Activated CD4-positive, alpha-beta memory T cell treated with anti-CD3 and anti-CD28 coated beads for 36 hours (primary cell): ENCODE measurements at regions of chr14 and their contacts with region 1.

Region 1: GRCh38 chr14:57268161-57269069 is at the starts of genes AP5M1 and EXOC5:
- DNase-seq: peak; percentile 96
- H3K4me3 Mint-ChIP-seq: peak within 1 kb of the TSS; percentile 99
- H3K27ac Mint-ChIP-seq: peak within 1 kb of the TSS; percentile 99
- H3K4me1 Mint-ChIP-seq: peaks cover 48% of the 10 kb centered on the region
- H3K27me3 Mint-ChIP-seq: no peaks in the 10 kb centered on the region
- total RNA-seq, gene AP5M1: 27.7 to 31.1 TPM
- total RNA-seq, gene EXOC5: 82.1 to 82.6 TPM

Region 2: DNA sequence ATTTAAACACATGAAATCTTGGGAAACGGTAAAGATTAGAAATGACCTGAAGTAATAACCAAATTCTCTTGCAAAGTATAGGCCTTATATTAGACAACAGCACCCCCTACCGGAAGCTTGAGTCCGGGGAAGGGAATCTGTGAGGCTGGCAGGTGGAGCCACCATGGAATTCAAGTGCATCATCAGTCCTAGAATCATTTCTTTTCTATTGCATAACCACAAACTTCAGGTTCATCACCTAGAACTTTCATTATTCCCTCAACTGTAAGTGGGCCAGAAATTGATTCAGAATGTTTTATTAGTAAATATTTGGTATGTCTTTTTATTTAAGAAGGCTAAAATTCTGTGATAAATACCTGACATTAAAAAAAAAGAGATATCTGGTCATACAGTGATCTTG is 48.9 kb after region 1 on chr14:
- CTCF ChIA-PET with region 1: interaction called, 12 read pairs
- POLR2A ChIA-PET with region 1: no interaction called
- intact Hi-C with region 1: no loop called
- DNase-seq: peak; percentile 73
- H3K4me3 Mint-ChIP-seq: no peak overlapping the region
- H3K27ac Mint-ChIP-seq: no peak overlapping the region
- H3K4me1 Mint-ChIP-seq: peaks cover 3% of the 10 kb centered on the region
- H3K27me3 Mint-ChIP-seq: no peaks in the 10 kb centered on the region